Heart left ventricle (tissue), 16 donors: ENCODE measurements at regions of chr5 and their contacts with region 1.

Region 1: GRCh38 chr5:157312492-157312891 is 46.6 kb downstream of the CYFIP2 start:
- DNase-seq: peak in 2 of 5 donors; percentile 34 to 45
- ATAC-seq: peak in 3 of 4 donors; percentile 71 to 80 (median 72)
- H3K4me3 ChIP-seq: no peak overlapping the region
- H3K27ac ChIP-seq: no peak overlapping the region
- H3K4me1 ChIP-seq: peaks cover 0 to 3% (median 0%) of the 10 kb centered on the region in 12 donors
- H3K27me3 ChIP-seq: no peaks in the 10 kb centered on the region
- CTCF ChIP-seq: peak; percentile 35 to 69 (median 58)
- POLR2A ChIP-seq: no peak

Region 2: DNA sequence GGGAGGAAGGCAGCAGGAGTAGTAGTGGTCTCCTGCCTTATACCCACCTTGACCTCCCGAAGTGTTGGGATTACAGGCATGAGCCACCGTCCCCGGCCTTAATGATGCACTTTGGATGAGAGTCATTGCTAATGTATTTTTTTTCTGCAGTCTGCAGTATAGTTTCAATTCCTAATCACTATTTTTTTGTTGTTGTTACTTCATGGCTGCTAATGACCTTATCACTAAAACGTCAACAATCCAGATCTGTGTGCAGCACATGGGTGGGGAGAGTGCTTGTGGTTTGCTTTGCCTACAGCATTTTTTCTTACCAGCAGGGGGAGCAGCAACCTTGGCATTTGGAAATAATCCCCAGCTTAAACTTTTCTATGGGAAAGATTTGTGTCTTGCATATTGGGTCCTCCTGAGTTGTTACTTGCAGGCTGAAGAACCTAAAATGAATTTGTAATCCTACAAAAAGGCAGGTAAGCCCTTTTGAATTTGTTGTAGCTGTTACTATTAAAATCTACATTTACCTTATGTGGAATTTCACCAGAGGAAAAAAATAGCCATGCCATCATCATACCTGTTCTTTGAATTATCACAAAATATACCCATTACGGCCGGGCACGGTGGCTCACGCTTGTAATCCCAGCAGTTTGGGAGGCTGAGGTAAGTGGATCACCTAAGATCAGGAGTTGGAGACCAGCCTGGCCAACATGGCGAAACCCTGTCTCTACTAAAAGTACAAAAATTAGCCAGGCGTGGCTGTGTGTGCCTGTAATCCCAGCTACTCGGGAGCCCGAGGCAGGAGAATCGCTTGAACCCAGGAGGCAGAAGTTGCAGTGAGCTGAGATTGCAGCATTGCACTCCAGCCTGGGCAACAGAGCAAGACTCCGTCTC is 163.5 kb before region 1 on chr5:
- intact Hi-C with region 1: loop called in 9 of 10 experiments (anchors 2 to 10 kb)
- DNase-seq: peak in 3 of 5 donors; percentile 46 to 62 (median 48)
- ATAC-seq: peak in 3 of 4 donors; percentile 71 to 79 (median 74)
- H3K4me3 ChIP-seq: no peak overlapping the region
- H3K27ac ChIP-seq: no peak overlapping the region
- H3K4me1 ChIP-seq: peaks cover 0 to 13% (median 3%) of the 10 kb centered on the region in 12 donors
- H3K27me3 ChIP-seq: no peaks in the 10 kb centered on the region
- CTCF ChIP-seq: peak; percentile 72 to 95 (median 87)
- POLR2A ChIP-seq: no peak

Region 3: GRCh38 chr5:157159209-157159751 is 153.2 kb before region 1 on chr5:
- intact Hi-C with region 1: loop called in 4 of 10 experiments (anchors 5 to 10 kb)
- DNase-seq: no peak
- ATAC-seq: no peak
- H3K4me3 ChIP-seq: no peak overlapping the region
- H3K27ac ChIP-seq: peak overlapping the region in 1 of 12 donors; percentile 42
- H3K4me1 ChIP-seq: peaks cover 0 to 5% (median 0%) of the 10 kb centered on the region in 12 donors
- H3K27me3 ChIP-seq: peaks cover 0 to 13% (median 0%) of the 10 kb centered on the region in 9 donors
- CTCF ChIP-seq: no peak
- POLR2A ChIP-seq: no peak

Region 4: GRCh38 chr5:157253547-157253946 is 58.9 kb before region 1 on chr5:
- intact Hi-C with region 1: loop called (anchors 2 to 5 kb)
- DNase-seq: no peak
- ATAC-seq: peak; percentile 81 to 88 (median 85)
- H3K4me3 ChIP-seq: no peak overlapping the region
- H3K27ac ChIP-seq: peak overlapping the region in 1 of 12 donors; percentile 58
- H3K4me1 ChIP-seq: peaks cover 0 to 49% (median 0%) of the 10 kb centered on the region in 12 donors
- H3K27me3 ChIP-seq: no peaks in the 10 kb centered on the region
- CTCF ChIP-seq: peak; percentile 67 to 85 (median 79)
- POLR2A ChIP-seq: no peak

Region 5: DNA sequence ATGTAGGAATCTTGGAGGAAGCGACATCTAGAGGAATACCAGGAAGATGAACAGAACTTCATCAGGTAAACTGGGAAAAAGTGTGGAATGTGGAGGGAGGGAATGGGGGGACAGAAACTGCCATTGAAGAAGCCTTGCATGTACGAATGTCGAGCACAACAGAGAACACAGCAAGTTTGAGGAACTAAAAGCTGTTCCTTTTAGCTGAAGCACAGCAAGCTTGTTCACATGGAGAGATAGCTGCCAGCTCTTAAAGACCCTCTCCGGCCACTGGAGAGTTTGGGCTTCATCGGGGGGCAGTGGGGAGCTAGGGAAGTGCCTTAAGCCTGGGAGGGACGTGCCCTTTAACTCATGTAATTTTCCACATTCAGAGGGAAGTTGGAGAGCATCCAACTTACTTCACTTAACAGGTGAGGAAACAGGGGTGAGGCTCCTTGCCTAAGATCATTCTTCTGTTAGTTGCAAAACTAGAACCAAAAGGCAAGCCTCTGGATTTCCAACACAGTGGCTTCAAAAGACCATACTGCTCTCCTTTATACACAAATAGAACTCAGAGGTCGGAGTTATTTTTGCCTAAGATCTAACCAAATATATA is 48.9 kb before region 1 on chr5:
- intact Hi-C with region 1: loop called in 3 of 10 experiments (anchors 5 kb)
- DNase-seq: no peak
- ATAC-seq: no peak
- H3K4me3 ChIP-seq: no peak overlapping the region
- H3K27ac ChIP-seq: no peak overlapping the region
- H3K4me1 ChIP-seq: peaks cover 0 to 29% (median 12%) of the 10 kb centered on the region in 12 donors
- H3K27me3 ChIP-seq: peaks cover 0 to 5% (median 0%) of the 10 kb centered on the region in 9 donors
- CTCF ChIP-seq: no peak
- POLR2A ChIP-seq: no peak

Region 6: DNA sequence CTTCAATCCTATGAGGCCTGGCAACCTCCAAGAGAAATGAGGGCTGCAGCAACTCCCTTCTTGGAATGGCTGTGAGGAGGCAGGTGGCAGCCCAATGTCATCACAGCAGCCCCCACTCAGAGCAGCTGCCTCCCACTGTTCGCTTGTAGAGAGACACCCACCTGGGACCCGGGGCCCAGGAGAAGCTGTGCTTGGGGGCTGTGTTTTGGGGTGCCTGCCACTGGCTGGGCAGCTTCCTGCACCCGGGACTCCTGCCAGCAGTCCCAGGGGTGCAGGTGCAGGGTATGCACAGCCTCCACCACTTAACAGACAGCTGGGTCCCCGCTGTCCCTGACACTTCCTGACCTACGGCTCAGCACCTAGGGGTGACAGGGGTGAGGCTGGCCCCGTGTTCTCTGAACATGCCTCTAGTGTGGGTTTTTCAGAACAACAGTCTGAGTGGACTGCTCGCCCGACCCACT is 173.8 kb after region 1 on chr5:
- intact Hi-C with region 1: no loop called
- DNase-seq: no peak
- ATAC-seq: peak in 1 of 4 donors; percentile 27
- H3K4me3 ChIP-seq: no peak overlapping the region
- H3K27ac ChIP-seq: peak overlapping the region in 1 of 12 donors; percentile 22
- H3K4me1 ChIP-seq: peaks cover 0 to 13% (median 2%) of the 10 kb centered on the region in 12 donors
- H3K27me3 ChIP-seq: no peaks in the 10 kb centered on the region
- CTCF ChIP-seq: no peak
- POLR2A ChIP-seq: no peak